Lower leg skin (tissue), 4 donors: ENCODE measurements at regions of chr12 and their contacts with region 1.

Region 1: GRCh38 chr12:124767066-124767821 is 96.4 kb downstream of the SCARB1 start:
- DNase-seq: peak; percentile 69 to 96
- H3K4me3 ChIP-seq: no peak overlapping the region
- CTCF ChIP-seq: peak in 1 of 3 donors; percentile 95
- POLR2A ChIP-seq: no peak

Region 2: DNA sequence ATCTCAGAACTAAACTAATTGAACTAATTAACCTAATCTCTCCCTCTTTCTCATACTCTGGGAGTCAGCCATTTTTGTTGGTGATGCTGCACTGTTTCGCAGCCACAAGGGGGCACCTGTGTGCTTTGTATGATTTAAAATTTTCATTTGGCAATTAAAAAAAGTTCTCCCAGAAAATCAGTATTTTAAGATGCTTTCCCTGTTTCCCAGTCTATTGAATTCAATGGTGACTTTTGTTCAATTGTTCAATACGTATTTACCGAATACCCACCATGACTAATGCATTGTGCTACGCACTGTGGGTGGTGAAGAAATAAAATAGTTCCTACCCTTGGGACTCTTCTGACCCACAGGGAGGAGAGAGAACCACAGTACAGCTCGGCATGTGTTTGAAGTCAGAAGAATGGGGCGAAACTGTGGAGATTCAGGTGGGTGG is 730.6 kb before region 1 on chr12:
- intact Hi-C with region 1: loop called (anchors 5 kb)
- DNase-seq: no peak
- H3K4me3 ChIP-seq: no peak overlapping the region
- CTCF ChIP-seq: peak in 1 of 3 donors; percentile 60
- POLR2A ChIP-seq: no peak

Region 3: DNA sequence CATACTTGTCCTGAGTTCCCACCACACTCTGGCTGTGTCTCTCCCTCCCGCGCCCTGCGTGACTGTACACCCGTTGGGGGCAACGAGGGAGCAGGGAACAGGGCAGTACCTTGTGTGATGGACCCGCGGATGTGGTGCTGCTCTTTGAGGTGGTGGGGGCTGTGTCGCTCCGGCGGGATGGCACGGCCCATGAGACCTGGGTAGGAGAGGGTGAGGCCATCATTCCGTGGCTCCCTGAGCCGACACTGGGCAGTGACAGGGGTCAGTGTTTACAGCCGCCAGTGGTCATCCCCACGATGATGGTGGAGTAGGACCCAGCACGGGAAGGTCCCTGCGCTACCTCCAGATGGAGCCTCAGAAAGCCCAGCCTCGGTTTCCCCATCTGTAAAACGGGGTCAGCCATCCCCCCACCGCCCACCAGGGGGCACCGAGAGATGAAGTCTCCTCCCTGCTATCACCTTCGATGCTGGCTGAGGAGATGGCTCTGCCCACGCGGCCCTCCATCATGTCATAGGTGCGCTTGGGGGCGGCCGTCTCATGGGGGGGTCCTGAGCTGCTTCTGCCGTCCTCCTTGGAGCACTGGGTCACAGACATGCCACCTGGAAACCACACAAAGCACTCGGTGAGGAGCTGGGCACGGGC is 419.4 kb before region 1 on chr12:
- intact Hi-C with region 1: loop called (anchors 10 kb)
- DNase-seq: peak in 1 of 2 donors; percentile 86
- H3K4me3 ChIP-seq: no peak overlapping the region
- CTCF ChIP-seq: no peak
- POLR2A ChIP-seq: no peak

Region 4: DNA sequence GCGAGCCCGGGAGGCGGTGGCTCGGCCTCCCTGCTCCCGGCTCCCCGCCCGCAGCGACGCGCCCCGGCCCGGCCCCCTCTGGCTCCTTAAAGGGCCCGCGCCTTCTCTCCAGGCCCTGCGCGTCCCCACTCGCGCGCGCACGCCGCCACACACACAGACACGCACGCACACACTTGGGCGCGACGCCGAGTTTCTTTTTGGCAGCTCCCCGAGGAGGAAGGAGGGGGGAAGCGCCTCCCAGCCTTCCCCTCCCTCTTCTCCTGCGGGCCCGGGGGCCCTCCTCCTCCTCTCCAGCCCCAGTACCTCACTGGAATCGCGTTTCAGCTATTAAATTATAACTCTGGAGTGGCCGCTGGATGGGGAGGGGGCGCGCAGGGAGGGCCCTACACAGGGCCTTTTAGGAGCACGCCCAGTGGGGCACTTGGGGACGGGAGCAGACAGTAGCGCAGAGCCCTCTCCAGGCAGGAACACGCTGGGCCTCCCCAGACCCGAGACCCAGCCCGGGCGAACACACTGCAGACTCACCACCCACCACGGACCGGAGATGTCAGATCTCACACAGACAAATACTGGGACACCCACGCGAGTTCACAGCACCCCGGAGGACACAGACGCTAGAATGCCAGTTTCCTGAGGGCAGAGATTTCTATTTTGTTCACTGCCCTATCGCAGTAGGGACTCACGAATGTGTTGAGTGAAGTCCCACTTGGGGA is 199.4 kb before region 1 on chr12:
- intact Hi-C with region 1: loop called (anchors 10 kb)
- DNase-seq: peak; percentile 90 to 98
- H3K4me3 ChIP-seq: no peak overlapping the region
- CTCF ChIP-seq: no peak
- POLR2A ChIP-seq: no peak